CD8-positive, alpha-beta T cell (primary cell): ENCODE measurements at regions of chr10 and their contacts with region 1.

Region 1: DNA sequence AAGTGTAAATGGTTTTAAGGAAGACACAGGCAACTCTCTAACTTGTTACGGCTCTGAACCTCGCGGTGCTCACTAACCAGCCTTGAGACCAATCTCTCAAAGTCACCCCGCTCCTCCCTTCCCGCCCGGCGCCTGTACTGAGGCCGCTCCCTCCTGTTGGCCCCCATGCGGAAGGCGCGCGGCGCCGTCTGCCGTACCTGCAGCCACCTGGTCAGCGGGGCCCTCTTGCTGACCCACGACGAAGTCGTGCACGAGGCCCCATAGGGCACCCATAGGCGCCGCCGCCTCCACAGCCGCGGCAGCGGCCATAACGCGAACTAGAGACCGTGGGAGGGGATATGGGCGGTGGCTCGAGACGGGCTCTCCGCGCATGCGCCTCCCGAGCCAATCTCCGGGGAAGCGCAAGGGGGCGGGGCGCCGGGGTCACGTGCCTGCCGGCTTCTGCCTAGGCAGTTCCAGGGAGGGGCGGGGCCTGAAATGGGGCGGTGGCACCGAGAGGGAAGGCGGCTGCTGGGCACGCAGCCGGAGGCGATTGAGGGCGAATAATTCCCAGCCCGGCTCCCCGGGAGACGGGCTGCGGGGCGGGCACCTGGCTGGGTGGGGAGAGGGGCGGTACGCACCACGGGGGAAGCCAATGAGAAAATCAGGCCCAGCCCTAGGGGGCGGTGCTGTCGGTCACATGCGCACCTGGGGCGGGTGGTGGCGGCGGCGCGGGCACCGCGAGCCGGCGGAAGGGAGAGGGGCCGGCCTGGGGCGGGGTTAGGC is at the start of gene MMS19:
- DNase-seq: peak; percentile 98 to 100 (median 99)
- ATAC-seq: peak; percentile 78
- H3K4me3 ChIP-seq: peak within 1 kb of the TSS; percentile 73 to 76
- H3K4me3 Mint-ChIP-seq: peak within 1 kb of the TSS; percentile 97
- H3K27ac ChIP-seq: peak within 1 kb of the TSS; percentile 73 to 83
- H3K27ac Mint-ChIP-seq: peak within 1 kb of the TSS; percentile 96
- H3K4me1 ChIP-seq: peaks cover 42% of the 10 kb centered on the region
- H3K4me1 Mint-ChIP-seq: peaks cover 42% of the 10 kb centered on the region
- H3K27me3 ChIP-seq: peaks cover 4 to 5% of the 10 kb centered on the region in 2 experiments
- H3K27me3 Mint-ChIP-seq: peaks cover 15% of the 10 kb centered on the region
- CTCF ChIP-seq: no peak
- total RNA-seq, gene MMS19: 48.4 to 49.5 TPM

Region 2: GRCh38 chr10:96973809-96974747 is 524.2 kb before region 1 on chr10:
- CTCF ChIA-PET with region 1: no interaction called
- POLR2A ChIA-PET with region 1: no interaction called
- intact Hi-C with region 1: no loop called
- DNase-seq: no peak
- ATAC-seq: no peak
- H3K4me3 ChIP-seq: no peak overlapping the region
- H3K4me3 Mint-ChIP-seq: no peak overlapping the region
- H3K27ac ChIP-seq: no peak overlapping the region
- H3K27ac Mint-ChIP-seq: no peak overlapping the region
- H3K4me1 ChIP-seq: no peaks in the 10 kb centered on the region
- H3K4me1 Mint-ChIP-seq: no peaks in the 10 kb centered on the region
- H3K27me3 ChIP-seq: no peaks in the 10 kb centered on the region
- H3K27me3 Mint-ChIP-seq: no peaks in the 10 kb centered on the region
- CTCF ChIP-seq: no peak

Region 3: DNA sequence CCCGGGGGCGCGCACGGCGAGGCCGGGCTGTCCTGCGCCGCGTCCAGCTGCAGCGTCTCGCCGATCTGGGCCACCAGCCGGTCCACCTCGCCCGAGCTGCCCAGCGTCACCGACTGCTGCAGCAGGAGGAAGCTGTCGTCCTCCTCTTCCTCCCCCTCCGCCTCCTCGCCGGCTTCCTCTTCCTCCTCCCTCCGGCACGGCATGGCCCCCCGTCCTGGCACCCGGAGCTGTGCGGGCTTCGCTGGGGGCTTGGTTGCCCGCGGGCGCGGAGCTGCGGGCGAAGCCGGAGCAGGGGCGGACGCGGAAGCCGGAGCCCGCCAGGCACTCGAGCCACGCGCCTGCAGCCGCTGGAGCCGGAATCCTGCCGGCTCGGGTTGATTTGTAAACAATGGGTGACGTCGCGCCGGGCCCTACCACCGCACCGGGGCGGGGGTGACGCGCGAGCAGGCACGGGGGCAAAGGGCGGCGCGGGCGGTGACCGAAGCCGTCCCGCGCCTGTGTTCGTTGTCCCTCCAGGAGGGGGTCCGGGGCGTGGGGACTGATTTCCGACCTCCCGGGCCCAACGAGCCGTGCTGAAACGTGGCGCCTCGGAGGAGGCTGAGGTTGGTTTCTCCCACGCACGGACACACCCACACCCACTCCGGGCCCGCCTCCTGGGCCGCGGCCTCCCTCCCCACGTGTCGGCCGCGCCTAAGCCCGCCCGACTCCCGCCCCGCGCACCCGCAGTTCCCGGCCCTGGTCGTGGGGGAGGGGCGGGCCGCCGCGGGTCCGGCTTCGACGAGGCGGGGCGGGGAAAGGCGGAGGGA is 163.7 kb before region 1 on chr10 and contains the start of gene FRAT2:
- CTCF ChIA-PET with region 1: no interaction called
- POLR2A ChIA-PET with region 1: interaction called, 6 read pairs
- intact Hi-C with region 1: loop called (anchors 1 to 2 kb)
- DNase-seq: peak; percentile 80 to 95 (median 87)
- ATAC-seq: peak; percentile 89
- H3K4me3 ChIP-seq: peak within 1 kb of the TSS; percentile 61 to 92
- H3K4me3 Mint-ChIP-seq: peak within 1 kb of the TSS; percentile 97
- H3K27ac ChIP-seq: peak within 1 kb of the TSS; percentile 99
- H3K27ac Mint-ChIP-seq: peak within 1 kb of the TSS; percentile 96
- H3K4me1 ChIP-seq: peaks cover 34% of the 10 kb centered on the region
- H3K4me1 Mint-ChIP-seq: peaks cover 39% of the 10 kb centered on the region
- H3K27me3 ChIP-seq: no peaks in the 10 kb centered on the region
- H3K27me3 Mint-ChIP-seq: no peaks in the 10 kb centered on the region
- CTCF ChIP-seq: no peak
- total RNA-seq, gene FRAT2: 20.8 to 22.3 TPM

Region 4: GRCh38 chr10:97425964-97426775 is 72.1 kb before region 1 on chr10 and contains the start of gene PGAM1:
- CTCF ChIA-PET with region 1: interaction called, 3 read pairs
- POLR2A ChIA-PET with region 1: no interaction called
- intact Hi-C with region 1: loop called (anchors 1 kb)
- DNase-seq: peak; percentile 91 to 99 (median 93)
- ATAC-seq: peak; percentile 81
- H3K4me3 ChIP-seq: peak within 1 kb of the TSS; percentile 84
- H3K4me3 Mint-ChIP-seq: peak within 1 kb of the TSS; percentile 90
- H3K27ac ChIP-seq: peak within 1 kb of the TSS; percentile 85 to 86
- H3K27ac Mint-ChIP-seq: peak within 1 kb of the TSS; percentile 92
- H3K4me1 ChIP-seq: peaks cover 24% of the 10 kb centered on the region
- H3K4me1 Mint-ChIP-seq: peaks cover 44% of the 10 kb centered on the region
- H3K27me3 ChIP-seq: no peaks in the 10 kb centered on the region
- H3K27me3 Mint-ChIP-seq: no peaks in the 10 kb centered on the region
- CTCF ChIP-seq: peak; percentile 47
- total RNA-seq, gene PGAM1: 56.7 to 56.8 TPM

Region 5: DNA sequence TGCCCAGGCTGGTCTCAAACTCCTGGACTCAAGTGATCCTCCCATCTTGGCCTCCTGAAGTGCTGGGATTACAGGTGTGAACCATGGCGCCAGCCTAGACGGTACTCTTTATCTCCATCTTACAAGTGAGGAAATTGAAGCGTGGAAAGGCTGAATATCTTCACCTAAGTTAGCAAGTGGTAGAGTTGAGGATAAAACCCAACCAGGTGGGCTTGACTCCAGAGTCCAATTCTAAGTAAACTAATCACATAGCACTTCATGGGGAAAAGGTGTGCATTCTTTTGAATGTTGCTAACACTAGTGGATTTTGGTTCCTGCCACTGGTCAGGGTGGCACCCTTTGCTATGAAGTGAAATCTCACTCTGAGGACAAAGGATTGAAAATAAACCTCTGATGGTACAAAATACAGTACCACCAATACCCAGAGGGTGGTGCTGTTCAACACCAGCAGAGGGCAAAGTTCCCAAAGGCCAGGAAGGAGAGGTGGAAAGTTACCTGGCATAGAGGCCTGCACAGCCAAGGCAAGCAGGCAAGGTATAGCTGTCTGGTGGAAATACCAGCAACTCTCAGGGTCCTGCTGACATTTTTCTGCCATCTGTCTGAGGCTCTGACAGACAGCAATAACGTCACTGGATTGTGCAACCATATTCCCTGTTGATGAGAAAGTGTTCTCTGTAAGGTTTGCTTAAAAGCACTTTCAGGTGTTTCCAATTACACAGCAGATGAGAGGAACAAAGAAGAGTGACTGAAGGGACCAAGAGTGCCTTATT is 34.7 kb before region 1 on chr10:
- CTCF ChIA-PET with region 1: interaction called, 4 read pairs
- POLR2A ChIA-PET with region 1: no interaction called
- intact Hi-C with region 1: loop called in 1 of 2 experiments (anchors 5 kb)
- DNase-seq: peak in 6 of 9 experiments; percentile 7 to 66 (median 36)
- ATAC-seq: peak; percentile 91
- H3K4me3 ChIP-seq: no peak overlapping the region
- H3K4me3 Mint-ChIP-seq: no peak overlapping the region
- H3K27ac ChIP-seq: no peak overlapping the region
- H3K27ac Mint-ChIP-seq: peak overlapping the region; percentile 45
- H3K4me1 ChIP-seq: no peaks in the 10 kb centered on the region
- H3K4me1 Mint-ChIP-seq: no peaks in the 10 kb centered on the region
- H3K27me3 ChIP-seq: no peaks in the 10 kb centered on the region
- H3K27me3 Mint-ChIP-seq: no peaks in the 10 kb centered on the region
- CTCF ChIP-seq: peak; percentile 83

Region 6: GRCh38 chr10:97479939-97480338 is 18.3 kb before region 1 on chr10:
- CTCF ChIA-PET with region 1: no interaction called
- POLR2A ChIA-PET with region 1: no interaction called
- intact Hi-C with region 1: no loop called
- DNase-seq: no peak
- ATAC-seq: no peak
- H3K4me3 ChIP-seq: no peak overlapping the region
- H3K4me3 Mint-ChIP-seq: no peak overlapping the region
- H3K27ac ChIP-seq: no peak overlapping the region
- H3K27ac Mint-ChIP-seq: no peak overlapping the region
- H3K4me1 ChIP-seq: no peaks in the 10 kb centered on the region
- H3K4me1 Mint-ChIP-seq: peaks cover 3% of the 10 kb centered on the region
- H3K27me3 ChIP-seq: no peaks in the 10 kb centered on the region
- H3K27me3 Mint-ChIP-seq: no peaks in the 10 kb centered on the region
- CTCF ChIP-seq: no peak

Region 7: DNA sequence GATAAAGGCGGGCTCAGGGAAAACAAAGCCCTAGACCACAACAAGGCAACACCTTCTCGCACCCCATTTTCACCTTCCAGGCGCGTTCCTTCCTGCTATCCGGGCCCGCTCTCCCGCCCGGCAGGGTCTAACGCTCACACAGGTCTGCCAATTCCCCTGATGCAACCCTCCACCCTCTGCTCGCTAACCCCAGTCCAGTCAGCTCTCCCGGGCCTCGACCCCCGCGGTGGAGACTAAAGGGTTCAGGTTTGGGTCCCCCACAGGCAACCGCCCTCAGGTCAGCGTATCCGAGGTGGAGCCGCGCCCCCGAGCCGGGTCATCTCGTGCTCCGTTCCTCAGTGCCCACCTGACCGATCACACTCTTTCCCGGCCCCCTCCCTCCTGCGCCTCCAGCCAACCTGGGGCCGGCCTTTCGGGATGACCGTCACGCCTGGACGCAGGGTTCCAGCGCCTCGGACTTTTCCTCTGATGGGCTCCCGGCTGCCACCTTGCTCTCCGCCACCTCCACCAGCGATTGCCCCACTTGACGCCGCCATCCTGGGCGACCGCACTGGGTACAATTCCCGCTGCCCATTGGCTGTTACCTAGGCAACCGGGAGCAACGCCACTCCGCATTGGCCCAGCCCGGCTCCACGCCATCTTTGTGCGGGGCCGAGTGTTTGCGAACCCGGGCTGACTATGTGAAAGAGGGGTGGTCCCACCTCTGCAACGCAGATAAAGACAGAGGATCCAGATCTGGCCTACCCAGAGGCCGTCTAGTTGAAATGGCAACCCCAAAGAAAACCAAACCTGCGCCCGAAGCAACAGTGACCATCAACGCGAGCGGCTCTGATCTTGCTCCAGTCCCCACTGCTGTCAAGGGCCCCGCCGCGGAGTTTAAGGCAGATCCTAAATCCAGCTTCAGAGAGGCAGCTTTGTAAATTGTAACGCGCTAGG is 135.0 kb after region 1 on chr10 and contains the start of gene MORN4:
- CTCF ChIA-PET with region 1: no interaction called
- POLR2A ChIA-PET with region 1: no interaction called
- intact Hi-C with region 1: loop called (anchors 1 to 2 kb)
- DNase-seq: peak; percentile 82 to 96 (median 91)
- ATAC-seq: peak; percentile 99
- H3K4me3 ChIP-seq: peak within 1 kb of the TSS; percentile 77 to 89
- H3K4me3 Mint-ChIP-seq: peak within 1 kb of the TSS; percentile 99
- H3K27ac ChIP-seq: peak within 1 kb of the TSS; percentile 18 to 39
- H3K27ac Mint-ChIP-seq: peak within 1 kb of the TSS; percentile 83
- H3K4me1 ChIP-seq: peaks cover 3% of the 10 kb centered on the region
- H3K4me1 Mint-ChIP-seq: peaks cover 13% of the 10 kb centered on the region
- H3K27me3 ChIP-seq: peaks cover 0 to 3% of the 10 kb centered on the region in 2 experiments
- H3K27me3 Mint-ChIP-seq: no peaks in the 10 kb centered on the region
- CTCF ChIP-seq: no peak
- total RNA-seq, gene MORN4: not detected

Region 8: DNA sequence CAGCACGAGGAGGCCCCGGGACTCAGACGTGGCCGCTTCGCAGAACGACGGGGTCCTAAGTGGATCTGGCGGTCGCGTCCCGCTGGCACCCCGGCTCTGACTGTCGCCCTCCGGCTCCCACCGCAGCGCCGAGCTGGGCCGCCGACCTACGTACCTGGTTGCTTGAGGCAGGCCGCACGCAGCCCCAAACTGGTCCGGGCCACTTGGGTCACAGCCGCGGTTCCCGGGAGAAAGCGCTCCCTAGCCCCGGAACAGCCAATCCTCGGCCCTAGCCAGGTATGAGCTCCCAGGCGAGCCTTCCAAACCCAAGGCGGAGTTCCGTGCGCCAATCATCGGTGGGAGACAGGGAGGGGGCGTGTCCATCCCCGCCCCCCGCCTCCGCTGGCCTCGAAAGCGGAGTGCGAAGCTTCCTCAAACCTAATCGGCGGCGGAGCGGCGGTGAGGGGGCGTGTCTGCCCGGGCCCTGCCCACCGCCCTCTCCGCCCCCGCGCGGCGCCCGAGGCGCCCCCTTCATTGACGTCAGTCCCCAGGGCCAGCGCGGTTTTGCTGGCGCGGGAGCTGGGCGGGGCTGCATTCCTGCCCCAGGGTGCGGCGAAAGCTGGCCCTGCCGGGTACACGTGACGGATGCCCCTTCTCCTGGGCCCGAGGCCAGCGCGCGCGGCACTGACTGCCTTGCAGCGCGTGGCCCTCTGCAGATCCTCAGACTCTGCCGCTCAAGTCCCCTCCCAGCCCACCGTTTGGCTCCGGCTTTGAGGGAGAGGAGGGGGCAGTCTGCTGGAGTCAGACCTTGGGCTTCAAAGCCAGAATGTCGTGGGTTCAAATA is 188.9 kb after region 1 on chr10 and contains the start of gene AVPI1:
- CTCF ChIA-PET with region 1: no interaction called
- POLR2A ChIA-PET with region 1: no interaction called
- intact Hi-C with region 1: loop called (anchors 1 kb)
- DNase-seq: peak; percentile 90 to 98 (median 96)
- ATAC-seq: peak; percentile 94
- H3K4me3 ChIP-seq: peak within 1 kb of the TSS; percentile 77 to 82
- H3K4me3 Mint-ChIP-seq: peak within 1 kb of the TSS; percentile 89
- H3K27ac ChIP-seq: peak within 1 kb of the TSS; percentile 47 to 64
- H3K27ac Mint-ChIP-seq: peak within 1 kb of the TSS; percentile 86
- H3K4me1 ChIP-seq: peaks cover 22% of the 10 kb centered on the region
- H3K4me1 Mint-ChIP-seq: peaks cover 23% of the 10 kb centered on the region
- H3K27me3 ChIP-seq: no peaks in the 10 kb centered on the region
- H3K27me3 Mint-ChIP-seq: peaks cover 4% of the 10 kb centered on the region
- CTCF ChIP-seq: no peak
- total RNA-seq, gene AVPI1: 13.7 TPM